ENCODE measurements at regions of chr1 and their contacts with region 1.

Region 1: DNA sequence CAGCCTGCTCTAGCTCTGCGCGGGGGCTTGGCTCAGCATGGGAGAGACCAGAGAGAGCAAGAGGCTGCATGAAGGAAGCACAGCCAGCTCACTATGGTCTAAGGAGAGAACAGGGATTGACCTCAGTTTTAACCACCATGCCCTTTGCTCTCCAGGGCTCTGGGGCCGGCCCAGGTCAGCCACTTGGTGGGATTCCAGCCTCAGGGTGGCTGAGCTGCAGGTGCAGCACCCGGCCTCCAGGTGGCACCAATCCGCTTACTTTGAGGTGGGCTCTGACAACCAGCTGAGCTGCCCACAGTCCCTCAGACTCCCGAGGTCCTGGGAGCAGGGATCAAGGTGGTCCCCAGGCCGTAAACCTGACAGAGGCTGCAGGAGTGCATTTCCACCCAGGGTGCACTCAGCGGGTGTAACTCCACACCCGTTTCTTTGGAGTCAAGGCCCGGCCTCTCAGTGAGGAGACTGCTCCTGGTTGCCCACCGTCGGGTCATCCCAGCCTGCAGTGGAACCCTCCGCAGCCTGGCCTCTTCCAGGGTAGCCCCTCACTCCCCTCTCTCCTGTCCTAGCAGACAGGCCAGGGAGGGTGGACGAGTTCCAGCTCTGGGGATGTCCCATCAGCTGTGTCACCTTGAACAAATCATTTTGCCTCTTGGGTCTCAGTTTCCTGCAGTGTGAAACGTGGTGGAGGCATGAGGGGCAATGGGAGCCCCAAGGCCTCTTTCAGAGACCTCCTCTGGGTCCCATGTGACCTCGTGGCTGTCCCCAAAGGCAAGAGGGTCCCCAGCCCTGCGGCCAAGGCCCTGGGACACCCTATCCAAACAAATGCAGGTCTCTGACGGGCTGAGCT is 607 bp upstream of the LGR6 start:
- DNase-seq: peak; percentile 75
- ATAC-seq: peak; percentile 72
- H3K4me3 Mint-ChIP-seq: no peak overlapping the region
- H3K27ac Mint-ChIP-seq: no peak overlapping the region
- H3K4me1 Mint-ChIP-seq: peaks cover 7% of the 10 kb centered on the region
- H3K27me3 Mint-ChIP-seq: peaks cover 14% of the 10 kb centered on the region
- CTCF ChIP-seq: peak; percentile 85

Region 2: GRCh38 chr1:202085682-202086404 is 107.1 kb before region 1 on chr1:
- CTCF ChIA-PET with region 1: no interaction called
- POLR2A ChIA-PET with region 1: no interaction called
- intact Hi-C with region 1: no loop called
- DNase-seq: no peak
- ATAC-seq: no peak
- H3K4me3 Mint-ChIP-seq: no peak overlapping the region
- H3K27ac Mint-ChIP-seq: no peak overlapping the region
- H3K4me1 Mint-ChIP-seq: no peaks in the 10 kb centered on the region
- H3K27me3 Mint-ChIP-seq: no peaks in the 10 kb centered on the region
- CTCF ChIP-seq: no peak

Region 3: DNA sequence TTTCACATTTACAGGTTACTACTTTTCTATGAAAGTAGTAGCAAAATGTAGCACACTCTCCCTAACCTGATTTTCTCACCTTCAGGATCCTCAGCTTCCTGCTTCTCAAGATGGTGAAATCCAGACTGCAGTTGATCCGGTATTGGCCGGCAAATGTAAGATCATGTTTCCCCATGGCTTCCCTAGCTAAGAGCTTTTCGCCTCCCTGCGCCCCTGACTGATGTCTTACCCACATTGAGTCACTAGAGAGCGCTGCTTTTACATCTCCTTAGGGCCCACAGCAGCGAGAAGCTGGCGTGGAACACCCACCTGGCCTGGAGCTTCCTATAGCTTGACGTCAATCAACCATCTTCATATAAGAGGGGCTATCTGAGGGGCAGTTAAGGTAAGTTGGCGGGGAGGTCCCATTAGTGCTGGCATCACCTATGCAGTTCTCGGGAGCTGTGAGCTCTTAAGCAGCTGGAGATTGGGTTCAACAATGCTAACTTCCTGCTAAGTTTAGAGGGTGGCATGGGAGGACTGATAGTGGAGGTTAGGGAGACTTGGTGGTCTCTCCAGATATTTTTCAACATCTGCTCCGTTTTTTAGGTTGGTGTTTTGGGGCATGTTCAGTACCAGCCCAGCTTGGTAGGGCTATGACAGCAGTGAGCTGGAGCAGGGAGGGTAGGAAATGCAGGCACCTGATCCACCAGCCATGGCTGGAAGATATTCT is 38.1 kb before region 1 on chr1:
- CTCF ChIA-PET with region 1: interaction called, 12 read pairs
- POLR2A ChIA-PET with region 1: no interaction called
- intact Hi-C with region 1: no loop called
- DNase-seq: peak; percentile 71
- ATAC-seq: peak; percentile 68
- H3K4me3 Mint-ChIP-seq: no peak overlapping the region
- H3K27ac Mint-ChIP-seq: peak overlapping the region; percentile 75
- H3K4me1 Mint-ChIP-seq: peaks cover 48% of the 10 kb centered on the region
- H3K27me3 Mint-ChIP-seq: no peaks in the 10 kb centered on the region
- CTCF ChIP-seq: peak; percentile 72

Region 4: DNA sequence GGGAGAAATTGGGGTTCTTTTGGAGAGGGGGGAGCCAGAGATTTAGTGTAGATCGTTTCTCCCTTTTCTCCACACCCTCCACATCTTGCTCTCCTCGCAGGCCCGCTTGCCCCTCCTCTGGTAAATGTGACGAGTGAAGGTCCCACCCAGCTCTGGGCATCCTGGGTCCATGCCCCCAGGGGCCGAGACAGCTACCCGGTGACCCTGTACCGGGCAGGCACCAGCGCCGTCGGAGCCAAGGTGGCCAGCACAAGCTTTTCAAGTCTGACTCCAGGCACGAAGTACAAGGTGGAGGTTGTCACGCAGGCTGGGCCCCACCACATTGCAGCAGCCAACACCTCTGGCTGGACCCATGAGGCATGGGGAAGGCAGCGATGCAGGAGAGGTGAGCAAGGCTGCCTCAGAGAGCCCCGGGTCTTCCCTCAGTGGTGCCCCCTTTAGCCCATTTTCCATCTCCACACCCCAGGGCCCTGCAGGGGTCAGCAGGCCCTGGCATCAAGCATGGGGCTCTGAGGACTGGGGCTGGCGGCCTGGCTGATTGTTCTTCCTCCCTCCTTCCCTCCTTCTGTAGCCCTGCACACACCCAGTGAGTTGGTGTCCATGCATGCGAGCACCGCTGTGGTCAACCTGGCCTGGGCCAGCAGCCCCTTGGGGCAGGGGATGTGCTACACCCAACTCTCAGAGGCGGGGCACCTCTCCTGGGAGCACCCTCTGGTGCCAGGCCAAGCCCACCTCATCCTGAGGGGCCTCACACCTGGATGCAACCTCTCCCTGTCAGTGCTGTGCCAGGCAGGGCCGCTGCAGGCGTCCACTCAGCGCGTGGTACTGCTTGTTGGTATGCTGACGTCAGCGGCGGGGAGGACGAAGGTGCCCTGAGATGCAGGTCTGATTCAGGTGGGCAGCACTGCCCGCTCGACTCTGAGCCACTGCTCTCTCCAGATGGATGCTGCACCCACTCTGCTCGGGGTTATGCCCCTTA is 15.8 kb before region 1 on chr1:
- CTCF ChIA-PET with region 1: interaction called, 58 read pairs
- POLR2A ChIA-PET with region 1: interaction called, 3 read pairs
- intact Hi-C with region 1: no loop called
- DNase-seq: no peak
- ATAC-seq: no peak
- H3K4me3 Mint-ChIP-seq: no peak overlapping the region
- H3K27ac Mint-ChIP-seq: no peak overlapping the region
- H3K4me1 Mint-ChIP-seq: no peaks in the 10 kb centered on the region
- H3K27me3 Mint-ChIP-seq: no peaks in the 10 kb centered on the region
- CTCF ChIP-seq: no peak

Region 5: DNA sequence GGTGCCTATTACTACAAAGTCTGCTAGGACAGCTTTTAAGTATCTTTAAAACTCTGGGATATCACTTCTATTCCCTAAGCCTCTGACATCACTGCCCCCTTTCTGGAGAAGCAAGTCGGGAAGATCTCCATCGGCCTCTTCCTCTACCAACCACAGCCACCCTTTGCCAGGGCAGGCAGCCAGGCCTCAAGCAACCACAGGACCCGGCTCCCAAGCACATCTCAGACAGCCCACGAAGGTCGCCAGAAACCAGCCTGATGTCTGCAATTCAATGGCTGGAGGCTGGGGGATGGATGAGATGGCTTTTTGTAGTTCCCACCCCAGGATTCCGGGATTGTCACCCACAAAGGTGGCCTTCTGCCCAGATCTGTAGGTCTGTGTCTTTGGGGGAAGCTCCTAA is 71.3 kb after region 1 on chr1:
- CTCF ChIA-PET with region 1: interaction called, 19 read pairs
- POLR2A ChIA-PET with region 1: no interaction called
- intact Hi-C with region 1: no loop called
- DNase-seq: no peak
- ATAC-seq: no peak
- H3K4me3 Mint-ChIP-seq: no peak overlapping the region
- H3K27ac Mint-ChIP-seq: no peak overlapping the region
- H3K4me1 Mint-ChIP-seq: no peaks in the 10 kb centered on the region
- H3K27me3 Mint-ChIP-seq: peaks cover 35% of the 10 kb centered on the region
- CTCF ChIP-seq: no peak

Region 6: GRCh38 chr1:202310071-202310722 is 117.2 kb after region 1 on chr1:
- CTCF ChIA-PET with region 1: interaction called, 36 read pairs
- POLR2A ChIA-PET with region 1: no interaction called
- intact Hi-C with region 1: no loop called
- DNase-seq: no peak
- ATAC-seq: no peak
- H3K4me3 Mint-ChIP-seq: no peak overlapping the region
- H3K27ac Mint-ChIP-seq: no peak overlapping the region
- H3K4me1 Mint-ChIP-seq: peaks cover 7% of the 10 kb centered on the region
- H3K27me3 Mint-ChIP-seq: peaks cover 1% of the 10 kb centered on the region
- CTCF ChIP-seq: no peak

Measured in activated CD8-positive, alpha-beta T cell treated with anti-CD3 and anti-CD28 coated beads for 36 hours (primary cell).